ENCODE measurements at regions of chr11 and their contacts with region 1.

Region 1: DNA sequence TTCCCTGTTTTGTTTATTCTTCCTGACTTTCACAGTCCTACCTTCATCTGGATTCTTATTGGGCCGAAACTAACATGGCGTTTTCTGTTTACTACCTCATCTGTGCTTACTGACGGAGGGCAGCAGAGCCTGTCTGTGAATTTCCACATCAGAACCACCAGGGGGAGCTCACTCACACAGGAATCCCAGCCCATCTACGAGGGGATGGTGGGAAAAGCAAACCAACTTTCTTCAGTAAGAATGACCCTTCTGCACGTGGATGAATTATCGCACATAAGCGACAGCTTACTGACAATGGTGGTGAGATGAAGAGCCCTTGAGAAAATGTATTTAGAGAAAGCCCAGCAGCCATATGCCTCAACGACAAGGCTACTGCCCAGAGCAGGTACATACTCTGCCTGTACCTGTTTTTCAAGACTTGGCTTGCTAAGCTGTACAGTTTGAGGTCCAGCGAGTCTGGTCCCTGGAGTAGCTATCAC is 42.5 kb downstream of the LARGE2 start:
- DNase-seq: peak; percentile 43
- H3K4me3 Mint-ChIP-seq: no peak overlapping the region
- H3K27ac Mint-ChIP-seq: no peak overlapping the region
- H3K4me1 Mint-ChIP-seq: peaks cover 9% of the 10 kb centered on the region
- H3K27me3 Mint-ChIP-seq: no peaks in the 10 kb centered on the region

Region 2: GRCh38 chr11:46006418-46007070 is 41.6 kb after region 1 on chr11:
- intact Hi-C with region 1: loop called (anchors 1 kb)
- DNase-seq: no peak
- H3K4me3 Mint-ChIP-seq: no peak overlapping the region
- H3K27ac Mint-ChIP-seq: no peak overlapping the region
- H3K4me1 Mint-ChIP-seq: peaks cover 2% of the 10 kb centered on the region
- H3K27me3 Mint-ChIP-seq: no peaks in the 10 kb centered on the region

Region 3: DNA sequence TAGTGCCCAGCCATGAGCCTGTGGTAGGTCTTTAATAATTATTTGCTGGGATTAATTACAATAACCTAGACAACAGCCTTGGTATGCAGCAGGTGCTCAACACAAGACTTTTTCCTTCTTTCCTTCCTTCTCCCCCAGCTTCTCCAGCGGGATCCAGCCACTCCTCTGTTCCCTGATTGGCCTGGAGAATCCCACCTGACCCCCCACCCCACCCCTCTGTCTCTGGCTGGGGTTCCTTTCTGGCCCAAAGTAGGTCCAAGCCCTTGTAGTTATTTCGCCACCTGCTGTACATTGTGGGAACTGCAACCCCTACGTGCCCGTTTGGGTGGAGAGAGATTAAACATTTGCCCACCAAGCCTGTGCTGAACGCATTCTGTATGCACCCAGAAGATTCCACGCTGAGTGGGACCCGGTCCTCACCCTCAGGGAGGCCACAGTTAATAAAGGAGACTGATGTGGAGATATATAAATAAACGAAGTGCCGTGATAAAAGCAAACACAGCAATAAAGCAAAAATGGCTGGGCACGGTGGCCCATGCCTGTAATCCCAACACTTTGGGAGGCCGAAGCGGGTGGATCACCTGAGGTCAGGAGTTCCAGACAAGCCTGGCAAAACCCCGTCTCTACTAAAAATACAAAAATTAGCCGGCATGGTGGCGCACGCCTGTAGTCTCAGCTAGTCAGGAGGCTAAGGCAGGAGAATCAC is 350.2 kb after region 1 on chr11:
- intact Hi-C with region 1: loop called (anchors 10 kb)
- DNase-seq: peak; percentile 52
- H3K4me3 Mint-ChIP-seq: no peak overlapping the region
- H3K27ac Mint-ChIP-seq: no peak overlapping the region
- H3K4me1 Mint-ChIP-seq: peaks cover 15% of the 10 kb centered on the region
- H3K27me3 Mint-ChIP-seq: no peaks in the 10 kb centered on the region

Measured in activated T-helper 2 cell treated with anti-CD3 and anti-CD28 coated beads, Interferon-gamma antibody, Interleukin-2, Interleukin-4, amounts not matched to agents 10 μg/mL and 5 μg/mL and 100 μg/mL, durations not matched to agents 14 hours and 24 hours and 36 hours (primary cell).